MCF 10A (cell line): ENCODE measurements at regions of chr11 and their contacts with region 1.

Region 1: DNA sequence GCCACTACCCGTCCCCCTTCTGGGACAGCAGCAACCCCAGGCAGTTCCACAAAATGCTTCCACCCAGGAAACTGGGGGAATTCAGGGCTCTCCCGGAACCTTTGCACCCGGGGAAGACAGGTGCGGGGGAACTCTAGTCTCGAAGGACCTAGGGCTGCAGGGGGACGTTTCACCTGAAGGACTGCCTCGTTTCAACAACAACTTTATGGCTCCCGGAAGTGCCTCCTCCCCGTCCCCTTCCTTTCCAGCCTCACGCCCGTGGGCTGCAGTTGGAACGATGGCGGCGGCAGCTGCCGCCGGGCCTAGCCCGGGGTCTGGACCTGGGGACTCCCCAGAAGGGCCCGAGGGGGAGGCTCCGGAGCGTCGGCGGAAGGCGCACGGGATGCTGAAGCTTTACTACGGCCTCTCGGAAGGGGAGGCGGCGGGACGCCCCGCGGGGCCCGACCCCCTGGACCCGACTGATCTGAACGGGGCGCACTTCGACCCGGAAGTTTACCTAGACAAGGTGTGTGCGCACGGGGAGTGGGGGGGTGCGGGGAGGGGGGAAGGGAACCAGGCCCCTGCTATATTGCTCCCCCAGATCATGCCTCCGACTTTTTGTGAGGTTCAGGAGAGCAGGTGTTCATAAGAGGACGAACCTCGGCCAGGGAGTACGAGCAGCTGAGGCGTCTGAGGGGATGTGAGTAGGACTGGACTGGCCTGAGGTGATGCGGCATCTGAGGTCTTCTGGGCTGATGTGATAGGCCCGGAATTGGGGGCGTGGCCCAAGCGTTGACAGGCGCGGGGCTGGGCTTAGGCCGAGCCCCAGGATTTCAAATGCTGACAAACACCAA is at the start of gene VPS51:
- DNase-seq: peak; percentile 88
- H3K4me3 Mint-ChIP-seq: peak within 1 kb of the TSS; percentile 80
- H3K27ac Mint-ChIP-seq: peak within 1 kb of the TSS; percentile 89
- H3K4me1 Mint-ChIP-seq: peaks cover 10% of the 10 kb centered on the region
- H3K27me3 Mint-ChIP-seq: no peaks in the 10 kb centered on the region
- CTCF ChIP-seq: no peak
- total RNA-seq, gene VPS51: 56.1 and 77.0 TPM in 2 replicates

Region 2: DNA sequence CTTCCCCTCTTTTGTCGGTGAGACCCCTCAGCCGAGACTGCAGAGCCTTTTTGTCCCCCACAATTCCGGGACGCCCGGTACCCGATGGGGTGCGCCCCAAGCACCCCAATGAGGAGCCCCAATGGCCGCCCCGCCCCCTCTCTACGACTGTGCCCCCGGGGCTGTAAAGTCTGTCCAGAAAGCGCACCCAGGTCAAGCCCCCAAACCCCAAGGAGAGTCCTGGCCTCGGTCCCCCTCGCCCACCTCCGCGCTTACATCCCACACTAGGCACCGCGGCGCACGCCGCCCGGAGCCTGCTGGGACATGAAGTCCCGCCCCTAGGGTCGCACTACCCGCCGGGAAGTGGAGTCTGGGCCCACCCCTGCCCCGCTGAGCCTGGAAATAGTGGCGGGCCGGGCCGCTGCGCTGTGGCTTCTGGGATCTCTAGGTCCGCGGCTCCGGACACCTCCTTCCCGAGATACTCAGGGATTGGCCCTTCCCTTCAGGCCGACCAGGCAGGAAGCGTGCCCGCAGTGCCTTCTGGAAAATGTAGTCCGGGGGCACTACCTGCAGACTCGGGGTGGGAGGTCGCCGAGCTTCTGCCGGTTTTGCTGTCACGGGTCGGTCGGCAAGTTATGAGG is 285.8 kb before region 1 on chr11 and contains the start of gene MEN1:
- CTCF ChIA-PET with region 1: no interaction called
- POLR2A ChIA-PET with region 1: no interaction called
- intact Hi-C with region 1: no loop called
- DNase-seq: peak; percentile 95
- H3K4me3 Mint-ChIP-seq: peak within 1 kb of the TSS; percentile 99
- H3K27ac Mint-ChIP-seq: peak within 1 kb of the TSS; percentile 93
- H3K4me1 Mint-ChIP-seq: peaks cover 10% of the 10 kb centered on the region
- H3K27me3 Mint-ChIP-seq: no peaks in the 10 kb centered on the region
- CTCF ChIP-seq: no peak
- total RNA-seq, gene MEN1: 29.2 and 33.1 TPM in 2 replicates

Region 3: GRCh38 chr11:65040847-65041621 is 55.2 kb before region 1 on chr11 and contains the start of gene SAC3D1:
- CTCF ChIA-PET with region 1: interaction called, 4 read pairs
- POLR2A ChIA-PET with region 1: interaction called, 20 read pairs
- intact Hi-C with region 1: no loop called
- DNase-seq: peak; percentile 93
- H3K4me3 Mint-ChIP-seq: peak within 1 kb of the TSS; percentile 89
- H3K27ac Mint-ChIP-seq: peak within 1 kb of the TSS; percentile 84
- H3K4me1 Mint-ChIP-seq: peaks cover 10% of the 10 kb centered on the region
- H3K27me3 Mint-ChIP-seq: no peaks in the 10 kb centered on the region
- CTCF ChIP-seq: no peak
- total RNA-seq, gene SAC3D1: 10.3 and 14.0 TPM in 2 replicates

Region 4: GRCh38 chr11:65083834-65084597 is 12.2 kb before region 1 on chr11 and contains the starts of genes CDCA5 and ZFPL1:
- CTCF ChIA-PET with region 1: interaction called, 3 read pairs
- POLR2A ChIA-PET with region 1: interaction called, 28 read pairs
- intact Hi-C with region 1: no loop called
- DNase-seq: peak; percentile 94
- H3K4me3 Mint-ChIP-seq: peak within 1 kb of the TSS; percentile 99
- H3K27ac Mint-ChIP-seq: peak within 1 kb of the TSS; percentile 99
- H3K4me1 Mint-ChIP-seq: peaks cover 25% of the 10 kb centered on the region
- H3K27me3 Mint-ChIP-seq: no peaks in the 10 kb centered on the region
- CTCF ChIP-seq: no peak
- total RNA-seq, gene CDCA5: 9.5 and 17.3 TPM in 2 replicates
- total RNA-seq, gene ZFPL1: 50.8 and 52.3 TPM in 2 replicates

Region 5: GRCh38 chr11:65111744-65112414 is 15.7 kb after region 1 on chr11 and contains the start of gene TM7SF2:
- CTCF ChIA-PET with region 1: interaction called, 94 read pairs
- POLR2A ChIA-PET with region 1: interaction called, 63 read pairs
- intact Hi-C with region 1: no loop called
- DNase-seq: peak; percentile 96
- H3K4me3 Mint-ChIP-seq: peak within 1 kb of the TSS; percentile 93
- H3K27ac Mint-ChIP-seq: peak within 1 kb of the TSS; percentile 94
- H3K4me1 Mint-ChIP-seq: peaks cover 11% of the 10 kb centered on the region
- H3K27me3 Mint-ChIP-seq: no peaks in the 10 kb centered on the region
- CTCF ChIP-seq: no peak
- total RNA-seq, gene TM7SF2: 8.5 and 14.0 TPM in 2 replicates

Region 6: DNA sequence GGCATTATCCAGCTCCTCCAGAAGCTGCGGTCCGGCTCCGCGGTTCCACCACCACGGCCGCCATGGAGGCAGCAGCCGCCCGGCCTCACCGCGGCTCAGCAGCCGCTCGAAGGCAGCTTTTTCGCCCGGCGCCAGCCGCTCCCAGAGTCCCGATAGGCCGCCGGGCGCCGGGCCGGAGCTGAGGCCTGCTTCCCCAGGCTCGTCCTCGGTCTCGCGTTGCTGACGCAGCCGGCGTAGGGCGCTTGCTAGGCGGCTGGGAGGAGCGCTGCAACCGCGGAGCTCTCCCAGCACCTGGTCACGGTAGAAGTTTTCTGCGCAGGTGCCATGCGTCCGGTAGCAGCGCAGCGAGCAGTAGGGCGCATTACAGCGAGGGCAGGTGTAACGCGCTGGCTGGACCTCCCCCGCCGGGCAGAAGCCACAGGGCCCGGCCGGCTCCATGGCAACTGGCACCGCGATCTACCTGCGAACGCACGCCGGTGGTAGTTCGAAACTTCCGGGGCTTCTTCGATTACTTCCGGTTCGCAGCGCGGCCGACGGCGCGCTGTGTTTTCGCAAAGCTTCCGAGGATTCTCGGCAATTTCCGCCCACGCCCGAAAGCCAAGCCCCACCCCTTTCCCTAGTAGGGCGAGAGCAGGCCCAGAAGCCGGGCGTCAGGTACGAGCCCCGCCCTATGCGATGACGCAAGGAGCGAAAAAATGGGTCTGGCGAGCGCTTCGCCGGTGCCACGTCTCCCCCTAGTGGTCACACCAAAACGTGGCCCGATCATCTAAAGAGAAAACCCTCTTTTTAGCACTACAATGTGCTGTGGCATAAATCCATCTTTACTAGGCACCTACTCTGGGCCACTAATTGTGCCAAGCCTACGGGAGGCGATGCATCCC is 21.3 kb after region 1 on chr11 and contains the start of gene ZNHIT2:
- CTCF ChIA-PET with region 1: interaction called, 94 read pairs
- POLR2A ChIA-PET with region 1: interaction called, 63 read pairs
- intact Hi-C with region 1: no loop called
- DNase-seq: peak; percentile 99
- H3K4me3 Mint-ChIP-seq: peak within 1 kb of the TSS; percentile 82
- H3K27ac Mint-ChIP-seq: peak within 1 kb of the TSS; percentile 88
- H3K4me1 Mint-ChIP-seq: peaks cover 16% of the 10 kb centered on the region
- H3K27me3 Mint-ChIP-seq: no peaks in the 10 kb centered on the region
- CTCF ChIP-seq: peak; percentile 84
- total RNA-seq, gene ZNHIT2: 22.0 and 23.6 TPM in 2 replicates

Region 7: GRCh38 chr11:65134386-65135253 is 38.4 kb after region 1 on chr11 and contains the start of gene SYVN1:
- CTCF ChIA-PET with region 1: no interaction called
- POLR2A ChIA-PET with region 1: interaction called, 13 read pairs
- intact Hi-C with region 1: no loop called
- DNase-seq: peak; percentile 98
- H3K4me3 Mint-ChIP-seq: peak within 1 kb of the TSS; percentile 99
- H3K27ac Mint-ChIP-seq: peak within 1 kb of the TSS; percentile 100
- H3K4me1 Mint-ChIP-seq: peaks cover 28% of the 10 kb centered on the region
- H3K27me3 Mint-ChIP-seq: no peaks in the 10 kb centered on the region
- CTCF ChIP-seq: no peak
- total RNA-seq, gene SYVN1: 74.9 and 99.8 TPM in 2 replicates